Activated T-helper 2 cell treated with anti-CD3 and anti-CD28 coated beads, Interferon-gamma antibody, Interleukin-2, Interleukin-4, amounts not matched to agents 10 μg/mL and 5 μg/mL and 100 μg/mL, durations not matched to agents 14 hours and 24 hours and 36 hours (primary cell): ENCODE measurements at regions of chr3 and their contacts with region 1.

Region 1: GRCh38 chr3:115147329-115148141 is 447 bp upstream of the ZBTB20 start:
- DNase-seq: peak; percentile 96
- H3K4me3 Mint-ChIP-seq: peak overlapping the region; percentile 97
- H3K27ac Mint-ChIP-seq: peak overlapping the region; percentile 99
- H3K4me1 Mint-ChIP-seq: peaks cover 17% of the 10 kb centered on the region
- H3K27me3 Mint-ChIP-seq: peaks cover 9% of the 10 kb centered on the region

Region 2: GRCh38 chr3:113745273-113746068 is 1402.1 kb before region 1 on chr3:
- intact Hi-C with region 1: loop called (anchors 5 kb)
- DNase-seq: peak; percentile 73
- H3K4me3 Mint-ChIP-seq: peak overlapping the region; percentile 96
- H3K27ac Mint-ChIP-seq: peak overlapping the region; percentile 100
- H3K4me1 Mint-ChIP-seq: peaks cover 64% of the 10 kb centered on the region
- H3K27me3 Mint-ChIP-seq: peaks cover 3% of the 10 kb centered on the region

Region 3: DNA sequence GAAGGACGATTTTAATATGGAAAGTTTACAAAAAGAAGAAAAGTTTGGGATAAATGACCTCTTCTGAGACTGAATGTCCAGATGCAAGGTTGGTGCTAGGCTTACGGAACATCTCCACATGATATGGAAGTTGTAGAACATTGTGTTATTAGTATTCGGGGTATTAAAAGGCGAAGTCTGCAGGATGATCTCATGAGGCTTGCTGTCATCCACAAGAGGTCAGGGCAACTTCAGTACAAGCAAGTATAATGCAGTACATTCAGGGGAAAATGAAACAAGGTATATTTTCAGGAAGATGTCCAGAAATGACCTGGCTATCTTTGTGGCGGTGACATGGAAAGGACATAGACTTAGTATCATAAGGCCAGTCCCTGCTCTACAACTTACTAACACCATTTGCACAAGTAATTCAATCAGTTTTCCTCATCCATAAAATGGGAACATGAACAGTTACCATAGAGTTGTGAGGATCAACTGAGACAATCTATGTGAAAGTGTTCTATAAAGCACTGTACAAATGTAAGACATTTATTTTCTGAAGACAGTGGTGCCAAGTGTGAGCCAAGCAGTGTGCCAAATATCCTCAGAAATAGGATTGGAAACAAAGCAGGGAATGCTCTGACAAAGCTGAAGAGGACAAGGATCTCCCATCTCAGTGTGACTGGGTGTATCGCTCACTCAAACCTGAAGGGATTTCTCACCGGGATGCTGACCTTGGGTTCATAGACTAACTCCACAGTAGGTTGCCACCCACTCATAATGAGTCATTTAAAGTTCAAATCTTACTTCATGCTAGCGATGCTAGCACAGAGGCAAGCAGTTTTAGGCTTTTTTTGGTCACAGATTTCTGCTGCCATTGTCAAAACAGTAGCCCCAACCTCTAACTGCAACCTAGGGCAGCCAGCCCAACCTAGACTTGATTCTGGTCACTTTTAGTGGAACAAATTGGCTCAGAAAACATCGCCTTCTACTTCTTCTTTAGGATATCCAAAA is 735.4 kb before region 1 on chr3:
- intact Hi-C with region 1: loop called (anchors 1 kb)
- DNase-seq: no peak
- H3K4me3 Mint-ChIP-seq: no peak overlapping the region
- H3K27ac Mint-ChIP-seq: peak overlapping the region; percentile 47
- H3K4me1 Mint-ChIP-seq: peaks cover 33% of the 10 kb centered on the region
- H3K27me3 Mint-ChIP-seq: no peaks in the 10 kb centered on the region

Region 4: DNA sequence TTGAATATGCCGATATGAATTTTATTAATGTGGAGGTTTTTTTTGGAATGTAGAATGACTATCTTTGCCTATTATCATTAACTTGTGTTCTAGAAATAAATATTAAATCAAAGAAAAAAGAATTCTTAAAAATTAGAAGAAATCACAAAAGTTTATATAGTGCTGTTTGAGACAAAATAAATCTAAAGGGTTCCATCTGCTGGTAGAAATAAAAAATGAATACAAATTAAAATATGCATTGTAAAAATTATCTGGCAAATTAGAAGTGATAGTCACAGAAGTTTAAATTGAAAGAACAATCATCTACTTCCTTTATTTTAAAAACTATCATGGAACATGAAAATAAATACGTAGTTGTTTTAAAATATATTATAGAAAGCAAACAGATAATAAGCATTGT is 22.3 kb after region 1 on chr3:
- intact Hi-C with region 1: loop called (anchors 1 kb)
- DNase-seq: no peak
- H3K4me3 Mint-ChIP-seq: no peak overlapping the region
- H3K27ac Mint-ChIP-seq: no peak overlapping the region
- H3K4me1 Mint-ChIP-seq: peaks cover 11% of the 10 kb centered on the region
- H3K27me3 Mint-ChIP-seq: peaks cover 11% of the 10 kb centered on the region

Region 5: GRCh38 chr3:115272036-115272824 is 124.7 kb after region 1 on chr3:
- intact Hi-C with region 1: no loop called
- DNase-seq: no peak
- H3K4me3 Mint-ChIP-seq: no peak overlapping the region
- H3K27ac Mint-ChIP-seq: no peak overlapping the region
- H3K4me1 Mint-ChIP-seq: no peaks in the 10 kb centered on the region
- H3K27me3 Mint-ChIP-seq: no peaks in the 10 kb centered on the region

Region 6: GRCh38 chr3:115783938-115784738 is 636.6 kb after region 1 on chr3:
- intact Hi-C with region 1: loop called (anchors 1 kb)
- DNase-seq: peak; percentile 85
- H3K4me3 Mint-ChIP-seq: peak overlapping the region; percentile 82
- H3K27ac Mint-ChIP-seq: peak overlapping the region; percentile 96
- H3K4me1 Mint-ChIP-seq: peaks cover 18% of the 10 kb centered on the region
- H3K27me3 Mint-ChIP-seq: peaks cover 15% of the 10 kb centered on the region